ENCODE measurements at regions of chr2 and their contacts with region 1.

Region 1: DNA sequence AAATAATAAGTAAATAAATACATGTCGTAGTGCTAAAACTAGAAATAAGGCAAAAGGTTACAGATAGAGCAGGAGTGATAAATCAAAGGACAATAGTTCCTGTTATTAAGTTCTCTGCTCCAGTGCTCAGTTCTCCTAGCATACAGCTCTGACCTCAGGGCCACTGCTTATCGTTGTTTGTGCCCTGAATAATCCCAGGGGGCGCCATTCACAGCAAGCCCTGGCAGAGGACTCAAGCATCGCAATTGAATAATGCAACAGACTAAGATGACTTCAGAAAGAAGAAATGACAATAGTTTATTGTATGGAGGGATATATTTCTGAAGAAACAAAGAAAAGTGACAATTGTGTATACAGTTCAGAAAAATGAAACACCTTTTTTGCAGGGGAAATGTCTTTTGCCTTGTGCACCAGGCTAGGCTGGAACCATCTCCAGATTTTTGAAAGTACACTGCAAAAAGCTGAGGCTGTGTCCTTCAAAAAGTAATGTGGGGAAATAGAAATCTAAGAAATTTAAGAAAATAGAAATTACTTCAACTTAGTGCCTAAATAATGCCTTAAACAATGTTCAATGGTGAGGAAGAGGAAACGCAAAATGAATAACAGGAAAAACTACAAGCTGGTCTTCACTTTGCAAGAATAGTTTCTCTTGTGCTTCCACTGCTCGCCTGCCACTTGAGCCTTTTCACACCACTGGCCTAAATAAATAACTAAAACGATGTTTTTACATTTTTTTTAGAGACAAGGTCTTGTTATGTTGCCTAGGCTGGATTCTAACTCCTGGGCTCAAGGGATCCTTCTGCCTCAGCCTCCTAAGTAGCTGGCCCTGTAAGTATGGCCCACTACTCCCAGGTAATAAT is 19.0 kb upstream of the CCNYL1 start:
- DNase-seq: no peak
- ATAC-seq: peak; percentile 84
- H3K4me3 ChIP-seq: no peak overlapping the region
- H3K27ac ChIP-seq: no peak overlapping the region
- H3K4me1 ChIP-seq: peaks cover 3% of the 10 kb centered on the region; the same call in 1 of the 2 replicates
- H3K27me3 ChIP-seq: no peaks in the 10 kb centered on the region
- CTCF ChIP-seq: peak; percentile 82

Region 2: DNA sequence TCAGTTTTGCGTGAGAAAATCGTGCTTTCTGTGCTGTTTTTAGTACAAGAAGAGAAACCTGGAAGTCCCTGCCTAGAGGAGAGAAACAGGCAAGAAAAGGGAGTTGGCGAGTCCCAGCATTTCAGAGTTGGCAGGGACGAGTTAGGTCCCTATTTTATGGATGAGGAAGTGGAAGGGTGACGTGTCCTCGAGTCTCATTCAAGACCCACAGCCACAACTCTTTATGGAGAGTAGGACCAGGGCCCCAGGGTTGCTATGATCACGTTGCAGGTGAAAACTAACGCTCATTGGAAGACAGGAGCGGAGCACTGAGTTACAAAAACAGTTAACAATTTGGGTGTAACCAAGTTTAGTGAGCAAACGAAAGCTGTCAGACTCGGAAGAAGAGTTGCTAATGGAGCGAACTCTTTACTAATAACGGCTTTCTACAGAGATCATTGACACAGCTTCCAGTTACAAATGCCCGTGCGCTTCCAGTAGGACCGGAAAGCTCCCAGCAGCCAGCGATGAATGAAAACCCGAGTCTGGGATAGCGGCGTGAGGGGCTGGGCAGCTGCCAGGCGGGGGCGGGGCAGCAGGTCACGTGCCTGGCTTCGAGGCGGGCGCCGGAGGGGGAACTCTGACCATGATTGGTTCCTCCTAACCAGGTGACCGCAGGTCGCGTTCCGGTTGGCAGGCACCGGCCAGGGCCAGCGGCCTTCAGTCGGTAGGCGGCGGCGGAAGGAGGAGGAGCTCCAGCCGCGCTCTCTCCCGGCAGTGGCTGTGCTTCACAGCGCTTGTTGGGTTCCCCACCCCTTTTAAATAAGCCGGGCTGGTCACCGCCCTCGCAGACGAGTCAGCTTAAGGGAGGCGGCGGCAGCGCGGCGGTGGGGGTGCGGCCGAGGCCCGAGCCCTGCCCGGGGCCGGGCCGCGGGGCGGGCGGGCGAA is 18.6 kb after region 1 on chr2 and contains the start of gene CCNYL1:
- CTCF ChIA-PET with region 1: no interaction called
- POLR2A ChIA-PET with region 1: interaction called, 10 read pairs
- in situ Hi-C with region 1: no loop called
- intact Hi-C with region 1: no loop called
- DNase-seq: peak; percentile 88
- ATAC-seq: peak; percentile 98
- H3K4me3 ChIP-seq: peak within 1 kb of the TSS; percentile 70 to 88
- H3K27ac ChIP-seq: peak within 1 kb of the TSS; percentile 91
- H3K4me1 ChIP-seq: peaks cover 7% of the 10 kb centered on the region
- H3K27me3 ChIP-seq: no peaks in the 10 kb centered on the region
- CTCF ChIP-seq: no peak
- total RNA-seq, gene CCNYL1: 31.4 TPM